OCI-LY7 (cell line): ENCODE measurements at regions of chr5 and their contacts with region 1.

Region 1: GRCh38 chr5:72816311-72817145 is at the start of gene TNPO1:
- DNase-seq: peak; percentile 92
- H3K4me3 ChIP-seq: peak within 1 kb of the TSS; percentile 78
- H3K27ac ChIP-seq: peak within 1 kb of the TSS; percentile 86
- H3K4me1 ChIP-seq: peaks cover 21% of the 10 kb centered on the region
- CTCF ChIP-seq: no peak
- total RNA-seq, gene TNPO1: 95.2 and 131 TPM in 2 replicates

Region 2: DNA sequence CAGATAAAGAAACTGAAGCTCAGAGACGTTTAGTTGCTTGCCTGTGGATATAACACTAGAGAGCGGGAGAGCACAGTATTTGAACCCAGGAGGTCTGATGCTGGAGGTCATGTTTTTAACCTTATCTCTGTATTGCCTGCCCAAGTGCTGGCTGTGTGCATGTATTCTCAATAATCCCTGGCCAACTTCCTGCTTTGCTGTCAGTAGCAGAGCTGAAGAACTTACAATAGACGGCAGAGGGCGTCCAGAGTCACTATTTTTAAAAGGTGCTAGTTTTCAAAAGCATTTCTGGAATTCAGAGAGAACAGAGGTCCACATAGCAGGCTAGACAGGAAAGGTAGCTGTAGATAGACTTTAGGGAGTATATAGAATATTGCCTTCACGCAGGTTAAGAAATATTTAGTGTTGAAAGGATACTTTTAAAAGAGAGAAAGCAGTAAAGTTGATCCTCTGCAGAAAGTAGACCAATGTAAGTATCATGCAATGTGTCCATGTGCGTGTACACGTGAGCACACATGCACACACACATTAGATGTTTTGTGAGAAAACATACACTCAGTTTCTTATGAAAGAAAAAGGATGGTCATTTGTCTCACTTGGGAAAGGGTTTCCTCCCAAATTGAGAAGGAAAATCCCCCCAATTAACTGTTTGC is 450.1 kb before region 1 on chr5:
- CTCF ChIA-PET with region 1: no interaction called
- POLR2A ChIA-PET with region 1: no interaction called
- intact Hi-C with region 1: loop called (anchors 5 kb)
- DNase-seq: peak; percentile 72
- H3K4me3 ChIP-seq: no peak overlapping the region
- H3K27ac ChIP-seq: no peak overlapping the region
- H3K4me1 ChIP-seq: no peaks in the 10 kb centered on the region
- CTCF ChIP-seq: peak; percentile 88

Region 3: GRCh38 chr5:72837524-72838096 is 21.1 kb after region 1 on chr5:
- CTCF ChIA-PET with region 1: interaction called, 4 read pairs
- POLR2A ChIA-PET with region 1: interaction called, 46 read pairs
- intact Hi-C with region 1: no loop called
- DNase-seq: no peak
- H3K4me3 ChIP-seq: no peak overlapping the region
- H3K27ac ChIP-seq: no peak overlapping the region
- H3K4me1 ChIP-seq: no peaks in the 10 kb centered on the region
- CTCF ChIP-seq: no peak

Region 4: DNA sequence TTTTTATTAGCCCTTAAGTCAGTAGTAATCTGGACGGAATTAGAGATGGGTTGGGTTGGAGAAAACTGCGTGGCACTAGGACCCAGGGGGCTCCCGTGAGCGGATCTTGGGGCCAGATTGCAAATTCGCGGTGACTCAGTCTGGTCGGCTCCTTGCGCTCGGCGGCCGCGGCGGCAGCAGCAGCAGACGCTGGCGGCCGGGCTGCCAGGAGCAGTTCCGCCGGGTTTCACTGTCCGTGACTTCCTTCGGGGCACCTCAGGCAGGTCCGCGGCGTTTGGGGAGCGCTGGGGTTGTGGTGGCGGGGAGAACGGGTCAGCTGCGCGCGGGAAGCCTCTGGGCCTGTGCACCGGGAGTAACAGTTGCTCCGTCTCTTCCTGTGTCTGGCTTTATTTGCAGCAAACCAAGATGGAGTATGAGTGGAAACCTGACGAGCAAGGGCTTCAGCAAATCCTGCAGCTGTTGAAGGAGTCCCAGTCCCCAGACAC is 31.5 kb after region 1 on chr5:
- CTCF ChIA-PET with region 1: no interaction called
- POLR2A ChIA-PET with region 1: interaction called, 27 read pairs
- intact Hi-C with region 1: loop called (anchors 1 kb)
- DNase-seq: peak; percentile 90
- H3K4me3 ChIP-seq: peak overlapping the region; percentile 99
- H3K27ac ChIP-seq: peak overlapping the region; percentile 93
- H3K4me1 ChIP-seq: peaks cover 39% of the 10 kb centered on the region
- CTCF ChIP-seq: no peak

Region 5: DNA sequence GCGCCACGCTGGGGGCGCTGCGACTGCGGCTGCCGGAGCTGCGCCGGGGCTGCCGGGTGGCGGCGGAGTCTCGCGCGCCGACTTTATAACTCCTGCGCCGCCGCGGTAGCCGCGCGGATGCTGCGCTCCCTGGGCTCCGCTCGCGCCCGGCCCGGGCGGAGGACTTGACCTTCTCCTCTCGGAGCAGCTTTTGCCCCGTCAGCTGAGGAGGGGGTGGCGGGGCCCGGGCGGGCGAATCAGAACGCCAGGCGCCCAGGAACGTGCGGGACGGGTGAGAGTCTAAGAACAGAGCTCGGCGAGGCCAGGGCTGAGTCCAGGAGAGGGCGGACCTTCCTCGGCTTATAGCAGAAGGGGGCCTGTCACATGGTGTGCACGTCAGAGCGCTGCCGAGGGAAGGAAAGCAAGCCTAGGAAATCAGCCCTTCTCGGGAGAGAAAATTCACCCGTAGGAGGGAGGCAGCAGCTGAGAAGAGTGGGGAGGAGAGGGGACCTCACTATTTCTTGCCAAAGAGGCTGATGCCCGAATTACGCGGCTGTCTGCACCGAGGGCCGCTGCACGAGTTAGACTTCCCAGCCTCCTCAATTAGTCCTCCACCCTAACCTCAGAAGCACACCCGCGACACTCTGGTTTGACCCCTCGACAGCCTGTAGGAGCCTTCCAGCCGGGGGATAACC is 632.1 kb after region 1 on chr5 and contains the start of gene FOXD1:
- CTCF ChIA-PET with region 1: no interaction called
- POLR2A ChIA-PET with region 1: no interaction called
- intact Hi-C with region 1: loop called (anchors 2 kb)
- DNase-seq: peak; percentile 58
- H3K4me3 ChIP-seq: peak within 1 kb of the TSS; percentile 65
- H3K27ac ChIP-seq: no peak within 1 kb of the TSS
- H3K4me1 ChIP-seq: peaks cover 12% of the 10 kb centered on the region
- CTCF ChIP-seq: 0 out of 2 replicates have a peak, but pooled peaks have one; percentile 8
- total RNA-seq, gene FOXD1: 0.75 and 1.5 TPM in 2 replicates